Body of pancreas (tissue), 4 donors: ENCODE measurements at regions of chr3 and their contacts with region 1.

Region 1: DNA sequence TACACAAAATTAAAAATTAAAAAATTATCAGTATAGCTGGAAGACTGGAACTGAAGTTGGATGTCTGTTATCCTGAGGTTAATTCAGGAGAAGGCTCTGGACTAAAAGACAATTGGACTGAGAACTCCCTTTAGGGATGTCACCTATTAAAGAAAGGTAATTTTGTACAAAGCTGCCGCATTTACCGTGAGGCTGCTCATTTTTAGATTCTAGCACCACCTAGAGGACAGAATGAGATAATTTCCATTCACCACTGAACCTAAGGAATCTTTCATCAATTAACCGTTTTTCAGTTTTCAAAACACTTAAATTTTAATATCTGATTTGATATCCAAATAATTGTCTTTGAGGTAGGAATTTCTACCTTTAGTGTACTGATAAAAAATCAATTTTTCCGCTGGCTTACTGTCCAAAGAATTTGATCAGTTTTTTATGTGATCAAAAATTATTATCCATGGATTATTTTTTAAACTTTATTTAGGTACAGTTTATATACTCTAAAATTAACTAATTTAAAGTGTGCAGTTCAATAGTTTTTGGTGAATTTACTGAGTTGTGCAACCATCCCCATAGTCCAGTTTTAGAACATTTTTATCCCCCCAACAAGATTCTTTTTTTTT is 106.7 kb upstream of the TNIK start:
- DNase-seq: no peak
- ATAC-seq: no peak
- H3K4me3 ChIP-seq: no peak overlapping the region
- H3K27ac ChIP-seq: no peak overlapping the region
- H3K4me1 ChIP-seq: no peaks in the 10 kb centered on the region
- H3K27me3 ChIP-seq: no peaks in the 10 kb centered on the region
- CTCF ChIP-seq: peak; percentile 57 to 88 (median 78)
- POLR2A ChIP-seq: no peak

Region 2: GRCh38 chr3:170966495-170966894 is 600.4 kb before region 1 on chr3:
- intact Hi-C with region 1: loop called (anchors 5 kb)
- DNase-seq: no peak
- ATAC-seq: no peak
- H3K4me3 ChIP-seq: no peak overlapping the region
- H3K27ac ChIP-seq: no peak overlapping the region
- H3K4me1 ChIP-seq: peaks cover 8% of the 10 kb centered on the region
- H3K27me3 ChIP-seq: no peaks in the 10 kb centered on the region
- CTCF ChIP-seq: no peak
- POLR2A ChIP-seq: no peak

Region 3: GRCh38 chr3:171049861-171050444 is 517.0 kb before region 1 on chr3:
- intact Hi-C with region 1: loop called (anchors 10 kb)
- DNase-seq: peak; percentile 61 to 72 (median 67)
- ATAC-seq: peak; percentile 78
- H3K4me3 ChIP-seq: no peak overlapping the region
- H3K27ac ChIP-seq: no peak overlapping the region
- H3K4me1 ChIP-seq: peaks cover 8% of the 10 kb centered on the region
- H3K27me3 ChIP-seq: no peaks in the 10 kb centered on the region
- CTCF ChIP-seq: peak; percentile 19 to 75 (median 71)
- POLR2A ChIP-seq: no peak

Region 4: GRCh38 chr3:171187706-171188290 is 379.1 kb before region 1 on chr3:
- intact Hi-C with region 1: loop called (anchors 10 kb)
- DNase-seq: peak; percentile 18 to 37 (median 22)
- ATAC-seq: peak; percentile 74
- H3K4me3 ChIP-seq: no peak overlapping the region
- H3K27ac ChIP-seq: no peak overlapping the region
- H3K4me1 ChIP-seq: peaks cover 10% of the 10 kb centered on the region
- H3K27me3 ChIP-seq: no peaks in the 10 kb centered on the region
- CTCF ChIP-seq: peak in 6 of 7 experiments; percentile 49 to 76 (median 70)
- POLR2A ChIP-seq: no peak